ENCODE measurements at regions of chr21 and their contacts with region 1.

Region 1: DNA sequence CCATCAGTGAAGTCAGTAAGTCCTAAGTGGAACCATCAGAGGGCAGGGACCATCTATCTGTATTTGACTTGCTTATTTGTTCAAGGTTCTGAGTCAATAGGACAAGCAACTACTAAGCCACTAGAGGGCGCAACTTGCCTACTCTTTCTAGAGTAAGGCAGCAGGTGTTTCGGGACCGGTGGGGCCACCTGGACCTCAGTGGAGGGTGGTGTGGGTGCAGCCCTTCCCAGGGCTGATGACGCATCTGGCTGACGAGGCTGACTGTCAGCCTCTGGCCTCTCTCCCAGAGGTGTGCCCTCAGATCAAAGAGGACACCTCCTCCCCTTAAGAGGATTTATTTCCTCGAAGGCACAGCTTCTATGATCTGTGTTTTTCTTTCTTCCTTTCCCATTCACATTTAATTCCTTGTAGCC is 6.6 kb downstream of the CBR3 start:
- DNase-seq: peak; percentile 82
- H3K4me3 ChIP-seq: no peak overlapping the region
- H3K27ac ChIP-seq: no peak overlapping the region
- H3K4me1 ChIP-seq: peaks cover 6% of the 10 kb centered on the region
- H3K27me3 ChIP-seq: no peaks in the 10 kb centered on the region
- CTCF ChIP-seq: peak; percentile 91

Region 2: GRCh38 chr21:36097266-36098230 is 44.0 kb before region 1 on chr21:
- CTCF ChIA-PET with region 1: no interaction called
- POLR2A ChIA-PET with region 1: no interaction called
- intact Hi-C with region 1: no loop called
- DNase-seq: peak; percentile 78
- H3K4me3 ChIP-seq: no peak overlapping the region
- H3K27ac ChIP-seq: no peak overlapping the region
- H3K4me1 ChIP-seq: peaks cover 32% of the 10 kb centered on the region
- H3K27me3 ChIP-seq: no peaks in the 10 kb centered on the region
- CTCF ChIP-seq: no peak

Region 3: DNA sequence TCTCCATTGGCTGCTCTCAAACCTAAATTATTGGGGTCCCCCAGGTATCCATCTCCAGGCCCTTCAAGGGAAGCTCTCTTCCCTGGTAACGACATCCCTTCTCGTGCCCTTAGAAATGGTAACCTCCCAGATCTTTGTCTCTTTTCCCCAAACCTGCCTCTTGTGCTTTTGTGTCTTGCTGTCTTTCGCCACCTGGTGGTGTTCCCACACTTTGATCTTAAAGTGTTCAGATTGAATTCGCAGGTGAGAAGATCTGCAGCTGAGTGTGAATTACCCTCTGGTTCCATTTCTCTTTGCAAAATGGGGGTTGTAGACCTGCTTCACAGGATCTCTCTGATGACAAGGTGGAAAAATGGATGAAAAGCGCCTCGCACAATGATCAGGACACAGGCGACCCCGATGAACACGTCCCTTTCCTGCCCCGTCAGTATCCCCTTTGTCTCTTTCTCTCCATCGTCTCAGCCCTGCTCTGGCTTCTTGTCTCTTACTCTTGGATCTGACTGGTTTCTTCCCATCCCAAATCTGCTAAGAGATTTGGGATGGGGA is 68.2 kb after region 1 on chr21:
- CTCF ChIA-PET with region 1: interaction called, 4 read pairs
- POLR2A ChIA-PET with region 1: no interaction called
- intact Hi-C with region 1: loop called (anchors 1 kb)
- DNase-seq: peak; percentile 58
- H3K4me3 ChIP-seq: no peak overlapping the region
- H3K27ac ChIP-seq: no peak overlapping the region
- H3K4me1 ChIP-seq: no peaks in the 10 kb centered on the region
- H3K27me3 ChIP-seq: no peaks in the 10 kb centered on the region
- CTCF ChIP-seq: peak; percentile 58

Region 4: GRCh38 chr21:36330904-36331303 is 189.4 kb after region 1 on chr21:
- CTCF ChIA-PET with region 1: interaction called, 4 read pairs
- POLR2A ChIA-PET with region 1: no interaction called
- intact Hi-C with region 1: loop called (anchors 1 kb)
- DNase-seq: peak; percentile 59
- H3K4me3 ChIP-seq: no peak overlapping the region
- H3K27ac ChIP-seq: no peak overlapping the region
- H3K4me1 ChIP-seq: peaks cover 9% of the 10 kb centered on the region
- H3K27me3 ChIP-seq: no peaks in the 10 kb centered on the region
- CTCF ChIP-seq: peak; percentile 70

Region 5: DNA sequence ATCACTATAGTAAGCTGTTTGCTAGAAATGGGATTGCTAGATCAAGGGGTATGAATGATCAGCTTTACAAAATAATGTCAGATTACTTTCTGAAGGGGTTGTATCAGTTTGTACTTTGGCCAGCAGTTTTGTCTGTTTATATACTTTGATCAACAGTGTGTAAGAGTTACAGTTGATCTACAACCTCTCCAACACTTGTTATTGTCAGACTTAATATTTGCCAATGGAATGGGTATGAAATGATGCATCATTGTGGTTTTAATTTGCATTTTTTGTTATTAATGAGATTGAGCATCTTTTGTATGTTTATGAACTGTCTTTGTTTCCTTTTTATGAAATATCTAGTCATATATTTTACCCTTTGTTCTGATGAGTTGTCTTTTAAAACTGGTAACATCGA is 935.9 kb after region 1 on chr21:
- CTCF ChIA-PET with region 1: interaction called, 10 read pairs
- POLR2A ChIA-PET with region 1: no interaction called
- intact Hi-C with region 1: no loop called
- DNase-seq: no peak
- H3K4me3 ChIP-seq: no peak overlapping the region
- H3K27ac ChIP-seq: no peak overlapping the region
- H3K4me1 ChIP-seq: peaks cover 11% of the 10 kb centered on the region
- H3K27me3 ChIP-seq: no peaks in the 10 kb centered on the region
- CTCF ChIP-seq: no peak